ENCODE measurements at regions of chr10 and their contacts with region 1.

Region 1: GRCh38 chr10:11684717-11685645 is 57.2 kb upstream of the ECHDC3 start:
- DNase-seq: peak; percentile 19 to 90 (median 74)
- ATAC-seq: peak; percentile 85 to 87
- H3K4me3 Mint-ChIP-seq: peak overlapping the region; percentile 85 to 94 (median 90)
- H3K27ac Mint-ChIP-seq: peak overlapping the region; percentile 97 to 100 (median 98)
- H3K4me1 Mint-ChIP-seq: peaks cover 46 to 92% (median 80%) of the 10 kb centered on the region in 4 donors
- H3K27me3 Mint-ChIP-seq: no peaks in the 10 kb centered on the region

Region 2: GRCh38 chr10:11611248-11612020 is 73.5 kb before region 1 on chr10 and contains the start of gene USP6NL:
- POLR2A ChIA-PET with region 1: interaction called, 10 read pairs
- DNase-seq: peak; percentile 35 to 76 (median 61)
- ATAC-seq: peak; percentile 61 to 70
- H3K4me3 Mint-ChIP-seq: peak within 1 kb of the TSS; percentile 87 to 97 (median 95)
- H3K27ac Mint-ChIP-seq: peak within 1 kb of the TSS; percentile 64 to 96 (median 94)
- H3K4me1 Mint-ChIP-seq: peaks cover 12 to 60% (median 52%) of the 10 kb centered on the region in 4 donors
- H3K27me3 Mint-ChIP-seq: no peaks in the 10 kb centered on the region
- polyA plus RNA-seq, gene USP6NL: 2.3 to 5.4 (median 4.2) TPM

Region 3: GRCh38 chr10:11661441-11661840 is 23.5 kb before region 1 on chr10:
- POLR2A ChIA-PET with region 1: interaction called, 15 read pairs
- DNase-seq: no peak
- ATAC-seq: no peak
- H3K4me3 Mint-ChIP-seq: peak overlapping the region in 1 of 10 donors; percentile 44
- H3K27ac Mint-ChIP-seq: peak overlapping the region in 6 of 10 donors; percentile 15 to 87 (median 80)
- H3K4me1 Mint-ChIP-seq: peaks cover 21 to 51% (median 32%) of the 10 kb centered on the region in 4 donors
- H3K27me3 Mint-ChIP-seq: no peaks in the 10 kb centered on the region